ENCODE measurements at regions of chr2 and their contacts with region 1.

Region 1: GRCh38 chr2:170680172-170680941 is 34.8 kb upstream of the SP5 start:
- DNase-seq: peak; percentile 40
- ATAC-seq: peak; percentile 99
- H3K4me3 ChIP-seq: peak overlapping the region; percentile 7; the same call in 1 of the 2 replicates
- H3K27ac ChIP-seq: no peak overlapping the region
- H3K4me1 ChIP-seq: peaks cover 13% of the 10 kb centered on the region; the same call in 1 of the 2 replicates
- H3K27me3 ChIP-seq: no peaks in the 10 kb centered on the region
- CTCF ChIP-seq: no peak
- EP300 ChIP-seq: peak in 1 of 2 experiments; percentile 50; a peak in 1 of 4 replicates
- POLR2A ChIP-seq: no peak
- RAD21 ChIP-seq: no peak

Region 2: DNA sequence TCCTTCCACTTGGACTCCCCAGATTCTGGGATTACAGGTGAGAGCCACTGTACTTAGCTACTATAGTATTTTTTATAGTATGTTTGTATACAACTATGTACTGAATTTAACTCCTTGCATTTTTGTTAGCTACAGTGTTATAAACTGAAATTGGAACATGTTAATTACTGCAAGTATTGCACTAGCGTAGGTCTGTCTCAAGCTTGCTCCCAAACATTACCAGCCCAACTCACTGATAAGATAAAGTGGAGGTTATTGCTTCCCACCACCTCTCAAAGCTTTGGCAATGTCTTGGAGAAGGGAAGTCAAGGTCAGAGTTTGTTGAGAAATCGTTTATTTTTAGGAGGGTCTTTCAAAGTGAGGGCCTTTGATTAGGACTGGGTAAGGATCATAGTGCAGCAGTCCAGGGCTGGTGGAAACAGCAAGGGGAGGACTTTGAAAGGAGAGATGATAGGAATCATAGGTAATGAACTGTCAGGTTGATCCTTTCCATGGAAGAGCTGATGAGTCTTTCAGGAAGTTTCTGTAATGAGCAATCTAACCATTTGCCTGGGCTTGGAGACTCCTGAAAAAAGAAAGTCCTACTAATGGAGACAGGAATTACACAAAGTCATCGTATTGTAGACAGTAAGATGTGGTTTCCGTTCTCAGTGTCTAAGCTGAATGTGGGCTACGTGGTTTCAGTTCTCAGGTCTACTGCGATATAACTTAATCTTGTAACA is 245.3 kb before region 1 on chr2:
- CTCF ChIA-PET with region 1: no interaction called
- POLR2A ChIA-PET with region 1: interaction called, 3 read pairs
- RAD21 ChIA-PET with region 1: interaction called, 3 read pairs
- SMC1A ChIA-PET with region 1: interaction called, 12 read pairs
- in situ Hi-C with region 1: no loop called
- intact Hi-C with region 1: no loop called
- DNase-seq: peak; percentile 51
- ATAC-seq: peak; percentile 94
- H3K4me3 ChIP-seq: no peak overlapping the region
- H3K27ac ChIP-seq: no peak overlapping the region
- H3K4me1 ChIP-seq: peaks cover 6% of the 10 kb centered on the region; the same call in 1 of the 2 replicates
- H3K27me3 ChIP-seq: no peaks in the 10 kb centered on the region
- CTCF ChIP-seq: no peak
- EP300 ChIP-seq: no peak
- POLR2A ChIP-seq: no peak
- RAD21 ChIP-seq: no peak

Region 3: DNA sequence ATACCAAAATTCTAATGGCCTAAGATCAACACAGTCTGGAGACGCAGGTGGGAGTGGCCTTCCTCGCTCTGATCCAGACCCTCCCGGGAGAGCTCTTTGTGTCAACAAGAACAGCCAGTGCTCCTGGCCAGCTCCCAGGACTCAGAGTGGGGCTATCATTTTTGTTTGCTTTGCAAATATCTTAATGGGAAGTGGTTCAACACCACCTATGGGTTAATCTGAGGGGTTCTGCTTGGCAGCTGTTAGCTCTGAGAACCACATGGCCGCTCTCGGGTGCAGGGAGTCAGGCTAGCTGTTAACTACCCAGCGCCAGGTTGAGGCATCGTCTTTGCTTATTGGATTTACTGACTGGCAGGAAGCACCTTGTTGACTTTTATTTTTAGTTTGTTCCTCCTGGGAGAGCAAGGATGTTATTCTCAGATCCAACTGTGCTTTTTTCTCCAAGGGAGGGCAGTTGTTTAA is 150.0 kb before region 1 on chr2:
- CTCF ChIA-PET with region 1: interaction called, 4 read pairs
- POLR2A ChIA-PET with region 1: interaction called, 8 read pairs
- RAD21 ChIA-PET with region 1: interaction called, 20 read pairs
- SMC1A ChIA-PET with region 1: interaction called, 15 read pairs
- in situ Hi-C with region 1: no loop called
- intact Hi-C with region 1: no loop called
- DNase-seq: no peak
- ATAC-seq: peak; percentile 13; the same call in 2 of the 3 replicates
- H3K4me3 ChIP-seq: no peak overlapping the region
- H3K27ac ChIP-seq: no peak overlapping the region
- H3K4me1 ChIP-seq: peaks cover 4% of the 10 kb centered on the region; the same call in 1 of the 2 replicates
- H3K27me3 ChIP-seq: no peaks in the 10 kb centered on the region
- CTCF ChIP-seq: no peak
- EP300 ChIP-seq: no peak
- POLR2A ChIP-seq: no peak
- RAD21 ChIP-seq: no peak

Region 4: GRCh38 chr2:170548304-170548703 is 132.1 kb before region 1 on chr2:
- CTCF ChIA-PET with region 1: interaction called, 5 read pairs
- POLR2A ChIA-PET with region 1: interaction called, 3 read pairs
- RAD21 ChIA-PET with region 1: interaction called, 10 read pairs
- SMC1A ChIA-PET with region 1: interaction called, 20 read pairs
- in situ Hi-C with region 1: no loop called
- intact Hi-C with region 1: no loop called
- DNase-seq: no peak
- ATAC-seq: peak; percentile 81
- H3K4me3 ChIP-seq: no peak overlapping the region
- H3K27ac ChIP-seq: no peak overlapping the region
- H3K4me1 ChIP-seq: no peaks in the 10 kb centered on the region
- H3K27me3 ChIP-seq: no peaks in the 10 kb centered on the region
- CTCF ChIP-seq: no peak
- EP300 ChIP-seq: peak in 1 of 2 experiments; percentile 40; a peak in 1 of 4 replicates
- POLR2A ChIP-seq: no peak
- RAD21 ChIP-seq: no peak

Region 5: DNA sequence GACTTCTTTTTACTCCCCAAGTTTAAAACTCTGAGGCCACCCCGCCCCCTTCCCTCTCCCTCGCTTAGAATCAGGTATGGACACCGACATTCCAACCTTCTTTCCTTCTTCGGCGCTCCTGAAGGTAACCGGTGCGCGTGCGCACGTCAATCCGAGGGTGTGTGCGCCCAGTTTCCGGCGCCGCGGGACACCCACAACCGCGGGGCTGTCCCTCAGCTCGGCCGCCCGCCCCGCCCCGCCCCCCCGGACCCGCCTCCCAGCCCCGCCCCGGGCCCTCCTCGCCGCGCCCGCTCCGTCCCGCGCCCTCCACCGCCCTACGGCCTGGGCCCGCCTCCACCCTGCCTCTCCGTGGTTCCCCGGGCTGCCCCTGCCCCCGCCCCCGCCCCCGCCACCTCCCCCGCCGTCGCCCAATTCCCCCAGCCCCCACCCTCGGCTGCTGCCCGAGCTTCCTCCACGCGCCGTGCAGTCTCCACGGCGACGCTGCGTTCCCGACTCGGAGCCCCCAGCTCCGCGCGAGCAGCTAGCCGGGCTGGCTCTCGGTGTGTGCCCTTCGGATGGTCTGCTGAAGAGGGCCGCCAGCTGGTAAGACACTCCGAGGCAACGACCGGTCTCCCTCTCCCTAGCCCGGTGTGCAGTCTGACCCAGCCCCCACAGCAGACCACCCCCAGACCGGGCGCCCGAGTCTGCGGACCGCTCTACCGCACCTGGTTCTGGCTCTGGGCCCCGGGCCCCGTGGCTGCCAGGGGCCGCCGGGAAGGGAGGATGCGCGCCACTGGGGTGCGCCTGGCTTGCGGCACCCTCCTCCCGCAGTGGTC is 90.5 kb after region 1 on chr2:
- CTCF ChIA-PET with region 1: interaction called, 4 read pairs
- POLR2A ChIA-PET with region 1: interaction called, 4 read pairs
- RAD21 ChIA-PET with region 1: interaction called, 14 read pairs
- SMC1A ChIA-PET with region 1: interaction called, 13 read pairs
- in situ Hi-C with region 1: no loop called
- intact Hi-C with region 1: no loop called
- DNase-seq: no peak
- ATAC-seq: peak; percentile 95
- H3K4me3 ChIP-seq: peak overlapping the region; percentile 97
- H3K27ac ChIP-seq: no peak overlapping the region
- H3K4me1 ChIP-seq: no peaks in the 10 kb centered on the region
- H3K27me3 ChIP-seq: peaks cover 0 to 13% of the 10 kb centered on the region in 2 experiments; a peak in 3 of 4 replicates
- CTCF ChIP-seq: no peak
- EP300 ChIP-seq: no peak
- POLR2A ChIP-seq: no peak
- RAD21 ChIP-seq: no peak

Region 6: GRCh38 chr2:170905864-170906263 is 225.5 kb after region 1 on chr2:
- CTCF ChIA-PET with region 1: no interaction called
- POLR2A ChIA-PET with region 1: no interaction called
- RAD21 ChIA-PET with region 1: no interaction called
- SMC1A ChIA-PET with region 1: no interaction called
- in situ Hi-C with region 1: no loop called
- intact Hi-C with region 1: no loop called
- DNase-seq: no peak
- ATAC-seq: no peak
- H3K4me3 ChIP-seq: no peak overlapping the region
- H3K27ac ChIP-seq: no peak overlapping the region
- H3K4me1 ChIP-seq: no peaks in the 10 kb centered on the region
- H3K27me3 ChIP-seq: no peaks in the 10 kb centered on the region
- CTCF ChIP-seq: no peak
- EP300 ChIP-seq: no peak
- POLR2A ChIP-seq: no peak
- RAD21 ChIP-seq: no peak

Measured in GM12878 (cell line).